ENCODE measurements at regions of chr1 and their contacts with region 1.

Region 1: GRCh38 chr1:177124577-177125278 is 39.8 kb downstream of the ASTN1 start:
- DNase-seq: no peak
- H3K4me3 ChIP-seq: no peak overlapping the region
- H3K27ac ChIP-seq: no peak overlapping the region
- H3K4me1 ChIP-seq: no peaks in the 10 kb centered on the region
- H3K27me3 ChIP-seq: peaks cover 13% of the 10 kb centered on the region
- CTCF ChIP-seq: no peak

Region 2: GRCh38 chr1:176745945-176746344 is 378.8 kb before region 1 on chr1:
- CTCF ChIA-PET with region 1: no interaction called
- POLR2A ChIA-PET with region 1: no interaction called
- intact Hi-C with region 1: no loop called
- DNase-seq: no peak
- H3K4me3 ChIP-seq: no peak overlapping the region
- H3K27ac ChIP-seq: no peak overlapping the region
- H3K4me1 ChIP-seq: no peaks in the 10 kb centered on the region
- H3K27me3 ChIP-seq: no peaks in the 10 kb centered on the region
- CTCF ChIP-seq: 0 out of 2 replicates have a peak, but pooled peaks have one; percentile 20

Region 3: GRCh38 chr1:177219554-177220513 is 95.1 kb after region 1 on chr1:
- CTCF ChIA-PET with region 1: no interaction called
- POLR2A ChIA-PET with region 1: no interaction called
- intact Hi-C with region 1: loop called (anchors 5 kb)
- DNase-seq: no peak
- H3K4me3 ChIP-seq: no peak overlapping the region
- H3K27ac ChIP-seq: no peak overlapping the region
- H3K4me1 ChIP-seq: no peaks in the 10 kb centered on the region
- H3K27me3 ChIP-seq: peaks cover 4% of the 10 kb centered on the region; the same call in 1 of the 2 replicates
- CTCF ChIP-seq: no peak

Region 4: DNA sequence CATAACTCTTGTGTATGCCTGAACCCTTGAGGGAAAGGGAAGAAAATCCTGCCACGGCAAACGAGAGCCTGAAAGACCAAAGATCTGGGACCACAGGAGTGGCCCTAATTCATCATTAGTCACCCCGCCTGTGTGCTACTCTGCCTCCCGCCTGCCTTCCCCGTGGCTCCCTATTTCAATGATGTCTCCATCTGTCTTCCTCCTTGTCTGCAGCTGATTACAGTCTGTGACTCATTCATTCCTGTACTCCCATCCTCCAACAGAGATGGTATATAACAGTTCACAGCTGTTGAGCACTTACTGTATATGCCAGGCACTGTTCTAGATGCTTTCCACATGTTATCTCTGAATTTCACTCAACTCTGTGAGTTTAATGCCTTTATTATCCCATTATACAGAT is 748.5 kb after region 1 on chr1:
- CTCF ChIA-PET with region 1: no interaction called
- POLR2A ChIA-PET with region 1: no interaction called
- intact Hi-C with region 1: loop called (anchors 5 kb)
- DNase-seq: no peak
- H3K4me3 ChIP-seq: no peak overlapping the region
- H3K27ac ChIP-seq: no peak overlapping the region
- H3K4me1 ChIP-seq: no peaks in the 10 kb centered on the region
- H3K27me3 ChIP-seq: peaks cover 48% of the 10 kb centered on the region
- CTCF ChIP-seq: no peak